HCT116 (cell line): ENCODE measurements at regions of chr7 and their contacts with region 1.

Region 1: DNA sequence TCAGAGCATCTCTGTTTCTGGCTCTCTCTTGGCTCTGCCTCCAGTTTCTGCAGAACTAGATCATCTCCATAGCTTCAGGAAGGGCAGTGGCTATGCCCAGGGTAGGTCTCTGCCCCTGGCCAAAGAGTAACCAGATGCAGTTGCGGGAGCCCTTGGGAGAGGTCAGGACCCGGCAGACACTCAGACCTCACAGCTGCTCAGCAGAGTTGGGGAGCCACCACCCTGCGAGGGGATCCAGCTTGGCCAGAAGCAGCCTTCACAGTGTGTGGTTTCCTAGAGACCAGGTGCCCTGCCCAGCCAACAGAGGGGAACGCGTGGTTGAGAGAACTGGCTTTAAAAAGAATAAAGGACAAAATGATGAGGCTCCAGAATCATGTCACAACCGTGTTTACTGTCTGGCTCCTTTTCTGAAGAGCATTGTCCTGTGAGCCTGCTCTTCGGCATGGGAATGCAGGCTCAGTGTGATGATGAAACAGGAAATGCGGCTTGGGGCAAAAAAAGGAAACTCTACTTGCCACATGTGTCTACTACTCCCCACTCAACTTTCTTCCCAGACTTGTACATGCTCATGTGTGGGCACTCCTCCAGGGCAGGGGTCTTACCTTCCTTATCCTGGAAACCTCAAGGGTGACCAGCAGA is 243.1 kb downstream of the INHBA start:
- DNase-seq: no peak
- ATAC-seq: no peak
- H3K4me3 ChIP-seq: no peak overlapping the region
- H3K27ac ChIP-seq: no peak overlapping the region
- H3K4me1 ChIP-seq: no peaks in the 10 kb centered on the region
- H3K27me3 ChIP-seq: no peaks in the 10 kb centered on the region
- CTCF ChIP-seq: no peak
- POLR2A ChIP-seq: no peak
- RAD21 ChIP-seq: no peak

Region 2: DNA sequence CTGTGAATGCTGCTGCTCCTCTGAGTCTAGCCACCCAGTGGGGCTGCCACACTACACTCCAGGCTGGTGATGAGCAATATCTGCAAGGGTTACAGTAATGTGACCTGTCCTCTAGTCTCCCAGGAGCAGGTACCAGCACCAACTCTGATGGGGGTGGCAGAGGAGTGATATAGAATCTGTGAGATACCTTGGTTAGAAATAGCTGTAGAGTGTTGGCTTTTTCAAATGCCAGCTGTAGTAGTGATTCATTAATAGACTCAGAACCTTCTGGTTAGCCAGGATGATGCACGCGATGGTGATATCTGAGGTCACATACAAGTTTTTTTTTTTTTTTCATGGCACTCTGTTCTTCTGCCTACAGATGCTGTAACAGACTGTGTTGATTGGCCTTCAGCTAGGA is 514.0 kb before region 1 on chr7:
- CTCF ChIA-PET with region 1: no interaction called
- POLR2A ChIA-PET with region 1: no interaction called
- RAD21 ChIA-PET with region 1: no interaction called
- intact Hi-C with region 1: no loop called
- DNase-seq: no peak
- ATAC-seq: no peak
- H3K4me3 ChIP-seq: no peak overlapping the region
- H3K27ac ChIP-seq: no peak overlapping the region
- H3K4me1 ChIP-seq: no peaks in the 10 kb centered on the region
- H3K27me3 ChIP-seq: no peaks in the 10 kb centered on the region
- CTCF ChIP-seq: no peak
- POLR2A ChIP-seq: no peak
- RAD21 ChIP-seq: no peak

Region 3: DNA sequence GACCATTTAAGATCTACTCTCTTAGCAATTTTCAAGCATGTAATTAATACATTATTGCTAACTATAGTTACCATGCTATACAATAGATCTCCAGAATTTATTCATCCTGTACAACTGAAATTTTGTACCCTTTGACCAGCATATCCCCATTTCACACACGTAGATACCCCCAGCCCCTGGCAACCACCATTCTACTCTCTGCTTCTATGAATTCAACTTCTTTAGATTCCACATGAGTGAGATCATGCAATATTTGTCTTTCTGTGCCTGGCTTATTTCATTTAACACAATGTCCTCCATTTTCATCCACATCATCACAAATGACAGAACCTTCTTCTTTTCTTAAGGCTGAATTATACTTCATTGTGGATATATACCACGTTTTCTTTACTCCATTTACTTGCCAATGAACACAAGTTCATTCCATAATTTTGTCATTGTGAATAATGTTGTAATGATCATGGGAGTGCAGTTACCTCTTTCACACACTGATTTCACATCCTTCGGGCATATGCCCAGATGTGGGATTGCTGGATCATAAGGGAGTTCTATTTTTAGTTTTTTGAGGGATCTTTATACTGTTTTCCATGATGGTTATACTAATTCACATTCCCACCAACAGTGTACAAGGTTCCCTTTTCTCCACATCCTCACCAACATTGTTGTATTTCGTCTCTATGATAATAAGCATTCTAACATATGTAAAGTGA is 48.2 kb before region 1 on chr7:
- CTCF ChIA-PET with region 1: no interaction called
- POLR2A ChIA-PET with region 1: no interaction called
- RAD21 ChIA-PET with region 1: no interaction called
- intact Hi-C with region 1: loop called (anchors 5 kb)
- DNase-seq: no peak
- ATAC-seq: no peak
- H3K4me3 ChIP-seq: no peak overlapping the region
- H3K27ac ChIP-seq: no peak overlapping the region
- H3K4me1 ChIP-seq: no peaks in the 10 kb centered on the region
- H3K27me3 ChIP-seq: no peaks in the 10 kb centered on the region
- CTCF ChIP-seq: no peak
- POLR2A ChIP-seq: no peak
- RAD21 ChIP-seq: no peak

Region 4: GRCh38 chr7:42107484-42108245 is 647.9 kb after region 1 on chr7:
- CTCF ChIA-PET with region 1: no interaction called
- POLR2A ChIA-PET with region 1: no interaction called
- RAD21 ChIA-PET with region 1: no interaction called
- intact Hi-C with region 1: no loop called
- DNase-seq: no peak
- ATAC-seq: no peak
- H3K4me3 ChIP-seq: no peak overlapping the region
- H3K27ac ChIP-seq: no peak overlapping the region
- H3K4me1 ChIP-seq: no peaks in the 10 kb centered on the region
- H3K27me3 ChIP-seq: peaks cover 8% of the 10 kb centered on the region; the same call in 1 of the 2 replicates
- CTCF ChIP-seq: no peak
- POLR2A ChIP-seq: no peak
- RAD21 ChIP-seq: no peak